ENCODE measurements at regions of chr7 and their contacts with region 1.

Region 1: GRCh38 chr7:122535086-122535485 is 163.8 kb downstream of the RNF133 start:
- DNase-seq: no peak
- ATAC-seq: no peak
- H3K4me3 ChIP-seq: no peak overlapping the region
- H3K27ac ChIP-seq: no peak overlapping the region
- H3K4me1 ChIP-seq: no peaks in the 10 kb centered on the region
- H3K27me3 ChIP-seq: no peaks in the 10 kb centered on the region
- CTCF ChIP-seq: no peak
- EP300 ChIP-seq: no peak
- POLR2A ChIP-seq: no peak
- RAD21 ChIP-seq: no peak

Region 2: GRCh38 chr7:122082670-122083069 is 452.4 kb before region 1 on chr7:
- CTCF ChIA-PET with region 1: no interaction called
- POLR2A ChIA-PET with region 1: no interaction called
- in situ Hi-C with region 1: no loop called
- intact Hi-C with region 1: loop called (anchors 2 kb)
- DNase-seq: no peak
- ATAC-seq: no peak
- H3K4me3 ChIP-seq: no peak overlapping the region
- H3K27ac ChIP-seq: no peak overlapping the region
- H3K4me1 ChIP-seq: no peaks in the 10 kb centered on the region
- H3K27me3 ChIP-seq: no peaks in the 10 kb centered on the region
- CTCF ChIP-seq: no peak
- EP300 ChIP-seq: no peak
- POLR2A ChIP-seq: no peak
- RAD21 ChIP-seq: no peak

Region 3: DNA sequence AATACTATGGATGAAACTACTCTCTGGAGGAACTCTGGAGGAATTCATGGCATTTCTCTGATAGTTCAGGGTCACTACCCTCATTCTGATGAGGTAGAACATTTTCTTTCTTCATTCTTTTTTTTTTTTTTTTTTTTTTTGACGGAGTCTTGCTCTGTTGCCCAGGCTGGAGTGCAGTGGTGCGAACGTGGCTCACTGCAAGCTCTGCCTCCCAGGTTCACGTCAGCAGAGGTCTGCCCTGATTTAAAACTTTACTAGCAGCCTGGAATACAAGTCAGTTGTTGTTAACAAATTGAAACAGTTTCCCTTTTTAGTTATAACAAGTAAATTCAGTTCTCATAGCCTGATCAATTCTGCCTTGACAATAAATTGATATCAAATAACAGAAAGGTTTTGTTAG is 54.0 kb before region 1 on chr7:
- CTCF ChIA-PET with region 1: no interaction called
- POLR2A ChIA-PET with region 1: no interaction called
- in situ Hi-C with region 1: no loop called
- intact Hi-C with region 1: no loop called
- DNase-seq: no peak
- ATAC-seq: no peak
- H3K4me3 ChIP-seq: no peak overlapping the region
- H3K27ac ChIP-seq: no peak overlapping the region
- H3K4me1 ChIP-seq: no peaks in the 10 kb centered on the region
- H3K27me3 ChIP-seq: no peaks in the 10 kb centered on the region
- CTCF ChIP-seq: no peak
- EP300 ChIP-seq: no peak
- POLR2A ChIP-seq: no peak
- RAD21 ChIP-seq: no peak